ENCODE measurements at regions of chr10 and their contacts with region 1.

Region 1: DNA sequence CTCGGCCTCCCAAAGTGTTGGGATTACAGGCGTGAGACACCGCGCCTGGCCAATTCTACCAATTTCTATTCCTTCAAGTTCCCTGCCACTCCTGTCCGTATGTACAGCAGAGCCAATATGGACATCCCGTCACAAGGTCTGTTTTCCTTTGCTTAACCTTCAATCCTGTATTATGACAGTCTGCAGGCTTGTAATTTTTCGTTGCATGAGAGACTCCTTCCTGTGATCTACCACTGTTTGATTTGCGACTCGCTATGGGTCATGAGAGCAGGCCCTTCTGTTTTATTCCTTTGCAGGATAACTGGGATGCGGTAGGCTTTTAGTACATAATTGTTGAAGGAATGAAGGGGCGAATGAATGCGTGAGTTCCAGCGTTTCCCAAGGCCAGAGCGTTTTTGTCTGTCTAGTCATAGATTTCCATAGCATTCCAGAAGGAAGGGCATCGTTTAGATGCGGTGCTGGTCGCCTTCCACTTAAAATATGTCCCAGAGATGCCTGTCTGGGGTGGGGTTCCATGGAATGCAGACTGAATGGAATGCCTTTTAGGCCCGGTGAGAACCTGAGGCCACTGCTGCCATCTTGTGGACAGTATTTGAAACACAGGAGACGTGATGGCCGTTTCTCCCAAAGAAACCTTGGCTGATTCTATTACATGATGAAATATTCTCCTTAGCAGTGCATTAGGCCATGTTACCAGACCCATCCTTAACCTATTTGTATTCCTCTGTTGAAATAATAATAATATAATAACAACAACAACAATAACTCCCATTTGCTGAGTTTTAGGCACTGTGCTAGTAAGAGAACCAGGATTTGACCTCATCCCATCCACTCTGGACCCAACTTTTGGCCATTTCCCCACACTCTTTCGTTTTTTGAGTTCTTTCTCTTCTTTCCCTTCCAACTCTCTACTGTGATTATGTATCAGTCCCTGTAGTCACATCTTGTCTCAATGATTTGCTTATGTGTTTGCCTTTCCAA is 193.2 kb downstream of the MYOF start:
- DNase-seq: peak; percentile 60
- ATAC-seq: peak; percentile 85
- H3K4me3 ChIP-seq: no peak overlapping the region
- H3K27ac ChIP-seq: peak overlapping the region; percentile 73; the same call in 1 of the 2 replicates
- H3K4me1 ChIP-seq: 0 out of 2 replicates have a peak, but pooled peaks cover 9% of the 10 kb centered on the region
- H3K27me3 ChIP-seq: no peaks in the 10 kb centered on the region
- CTCF ChIP-seq: peak; percentile 92

Region 2: DNA sequence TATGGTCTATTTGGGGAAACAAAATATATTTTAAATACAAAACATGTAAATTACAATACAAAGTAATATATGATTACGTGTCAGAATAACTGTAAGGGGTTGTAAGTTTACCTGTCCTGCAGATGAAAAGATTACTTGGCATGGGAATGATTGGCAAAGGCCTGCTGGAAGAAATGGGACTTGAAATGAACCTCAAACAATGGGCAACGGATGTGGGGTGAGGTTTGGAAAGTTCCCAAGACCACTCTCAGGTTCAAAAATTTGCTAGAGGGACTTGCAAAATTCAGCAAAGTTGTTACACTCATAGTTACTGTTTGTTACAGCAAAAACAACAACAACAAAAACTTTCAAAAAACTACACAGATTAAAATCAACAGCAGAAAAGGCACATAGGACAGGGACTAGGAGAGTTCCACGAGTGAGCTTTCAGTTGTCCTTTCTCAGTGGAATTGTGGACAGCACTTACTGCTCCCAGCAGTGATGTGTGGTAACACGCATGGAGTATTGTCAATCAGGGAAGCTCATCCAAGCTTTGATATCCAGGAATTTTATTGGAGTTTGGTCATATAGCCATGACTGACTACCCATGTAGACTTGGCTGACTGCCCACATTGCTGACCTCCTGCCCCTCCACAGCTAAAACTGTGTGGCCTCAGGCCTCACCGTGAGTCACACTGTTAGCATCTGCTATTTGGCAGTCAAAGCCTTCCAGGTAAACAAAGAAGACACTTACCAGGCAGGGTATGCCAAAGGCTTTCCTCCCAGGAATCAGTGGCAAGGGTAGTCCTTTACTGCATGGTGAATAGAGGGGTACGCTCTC is 396.8 kb before region 1 on chr10:
- CTCF ChIA-PET with region 1: no interaction called
- POLR2A ChIA-PET with region 1: no interaction called
- in situ Hi-C with region 1: no loop called
- intact Hi-C with region 1: loop called (anchors 5 kb)
- DNase-seq: peak; percentile 96
- ATAC-seq: peak; percentile 99
- H3K4me3 ChIP-seq: peak overlapping the region in 1 of 2 experiments; percentile 43; a peak in 2 of 4 replicates
- H3K27ac ChIP-seq: peak overlapping the region; percentile 89
- H3K4me1 ChIP-seq: peaks cover 49% of the 10 kb centered on the region
- H3K27me3 ChIP-seq: no peaks in the 10 kb centered on the region
- CTCF ChIP-seq: no peak

Region 3: DNA sequence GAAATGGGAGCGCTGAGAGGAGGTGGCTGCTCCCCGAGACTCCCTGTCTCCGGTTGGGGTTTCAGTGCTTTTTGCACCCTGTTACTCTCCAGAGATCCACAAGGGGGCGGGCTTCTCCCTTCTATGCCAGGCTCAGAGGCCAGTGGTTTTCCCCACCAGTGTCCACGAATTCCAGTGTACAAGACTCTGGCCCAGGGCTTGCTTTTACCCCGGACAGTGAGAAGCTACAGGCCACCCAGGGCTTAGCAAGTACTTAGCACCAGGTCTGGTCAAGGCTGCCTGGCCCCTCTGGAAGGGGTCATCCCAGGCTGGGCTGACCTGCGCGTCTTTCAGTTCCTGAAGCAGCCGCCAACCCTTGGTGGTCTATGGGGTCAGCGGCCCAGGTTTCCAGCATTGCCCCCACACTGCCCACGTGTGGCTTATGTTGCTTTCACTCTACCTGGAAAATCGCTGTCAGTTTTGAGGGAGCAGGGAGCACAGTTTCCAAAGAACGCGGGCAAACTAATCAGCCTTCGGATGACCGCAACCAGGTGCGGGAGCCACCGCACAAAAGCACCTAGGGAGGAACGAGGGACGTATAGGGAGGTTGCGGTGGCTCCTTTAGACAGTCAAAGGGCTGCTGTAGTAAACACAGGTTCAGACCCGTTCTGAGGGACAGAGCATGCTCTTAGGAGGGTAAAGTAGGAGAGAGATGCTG is 208.4 kb before region 1 on chr10:
- CTCF ChIA-PET with region 1: interaction called, 11 read pairs
- POLR2A ChIA-PET with region 1: no interaction called
- in situ Hi-C with region 1: no loop called
- intact Hi-C with region 1: loop called (anchors 2 kb)
- DNase-seq: no peak
- ATAC-seq: peak; percentile 83
- H3K4me3 ChIP-seq: peak overlapping the region in 1 of 2 experiments; percentile 43; a peak in 3 of 4 replicates
- H3K27ac ChIP-seq: no peak overlapping the region
- H3K4me1 ChIP-seq: no peaks in the 10 kb centered on the region
- H3K27me3 ChIP-seq: peaks cover 15% of the 10 kb centered on the region
- CTCF ChIP-seq: peak; percentile 95

Region 4: DNA sequence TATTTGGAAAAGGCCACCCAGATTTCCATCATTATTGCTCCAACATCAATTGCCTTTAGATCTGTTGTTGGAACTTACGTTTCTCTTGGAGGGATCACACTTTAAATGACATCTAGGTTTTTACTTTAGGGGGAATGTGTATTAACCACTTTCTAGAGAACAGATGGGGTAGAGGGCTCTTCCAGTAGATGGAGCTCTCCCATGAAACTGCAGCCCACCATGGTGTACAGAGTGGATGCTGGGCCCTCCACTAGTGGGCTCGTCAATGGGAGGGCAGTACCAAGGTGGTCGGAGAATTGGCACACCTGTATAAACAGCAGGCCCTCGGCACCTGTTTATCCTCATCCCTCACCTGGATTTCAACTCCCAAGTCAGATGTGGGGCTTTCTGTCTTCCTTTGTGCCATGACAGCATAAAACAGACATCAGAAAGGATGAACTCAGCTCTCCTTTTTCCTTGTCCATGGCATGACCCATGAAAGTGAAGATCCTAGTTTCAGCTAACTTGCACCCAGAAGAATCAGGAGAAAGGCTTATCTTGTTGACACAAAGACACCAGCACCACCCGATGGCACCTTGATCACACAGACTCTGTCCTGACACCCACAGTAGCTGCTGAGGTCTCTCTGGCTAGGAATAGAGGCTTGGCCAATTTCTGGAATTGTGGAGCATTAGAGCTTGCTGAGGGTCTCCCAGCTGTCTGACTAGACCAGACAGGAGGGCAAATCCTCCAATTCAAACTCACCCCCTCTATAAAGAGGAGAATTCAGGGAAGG is 64.8 kb before region 1 on chr10:
- CTCF ChIA-PET with region 1: no interaction called
- POLR2A ChIA-PET with region 1: no interaction called
- in situ Hi-C with region 1: no loop called
- intact Hi-C with region 1: no loop called
- DNase-seq: no peak
- ATAC-seq: 0 out of 2 replicates have a peak, but pooled peaks have one; percentile 49
- H3K4me3 ChIP-seq: no peak overlapping the region
- H3K27ac ChIP-seq: no peak overlapping the region
- H3K4me1 ChIP-seq: no peaks in the 10 kb centered on the region
- H3K27me3 ChIP-seq: peaks cover 2% of the 10 kb centered on the region; the same call in 1 of the 2 replicates
- CTCF ChIP-seq: peak; percentile 57